ENCODE measurements at regions of chr12 and their contacts with region 1.

Region 1: GRCh38 chr12:99043319-99043914 is 398.3 kb downstream of the APAF1 start:
- DNase-seq: peak; percentile 38
- CTCF ChIP-seq: peak; percentile 93

Region 2: GRCh38 chr12:98635657-98636323 is 407.6 kb before region 1 on chr12:
- CTCF ChIA-PET with region 1: no interaction called
- POLR2A ChIA-PET with region 1: no interaction called
- DNase-seq: peak; percentile 56
- CTCF ChIP-seq: no peak

Region 3: DNA sequence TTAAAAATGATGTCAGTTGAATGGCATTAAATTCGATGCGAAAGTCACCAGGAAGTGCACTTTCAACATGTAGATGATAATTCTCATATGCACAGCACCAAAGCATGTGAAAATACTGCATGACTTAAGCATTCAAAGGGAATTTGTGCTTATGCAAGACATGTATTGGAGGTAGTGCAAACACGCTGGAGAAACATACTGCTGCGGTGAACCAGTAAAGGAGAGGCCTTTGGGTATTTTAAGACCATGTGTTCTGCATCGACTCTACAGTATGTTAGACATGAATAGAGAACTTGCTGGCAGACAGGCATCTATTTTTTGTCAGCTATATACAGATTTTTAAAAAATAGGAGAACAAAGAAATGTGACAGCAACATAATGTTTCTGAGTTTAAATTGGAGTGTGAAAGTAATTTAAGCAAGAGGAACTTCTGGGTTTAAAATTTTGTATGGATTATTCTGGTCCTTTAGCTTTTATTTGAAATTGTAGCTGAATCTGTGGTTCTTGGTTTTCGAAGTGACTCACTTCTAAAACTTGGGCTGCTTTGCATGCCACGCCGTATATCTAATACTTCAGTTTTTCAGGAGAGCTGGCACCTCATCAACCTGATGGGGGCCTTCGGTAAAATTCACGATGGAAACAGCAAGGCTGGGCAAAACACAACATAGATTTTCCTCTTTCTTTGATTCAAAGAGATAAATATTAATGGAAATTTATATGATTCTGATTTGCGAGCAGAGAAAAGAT is 10.4 kb after region 1 on chr12:
- CTCF ChIA-PET with region 1: interaction called, 24 read pairs
- POLR2A ChIA-PET with region 1: no interaction called
- DNase-seq: no peak
- CTCF ChIP-seq: no peak

Region 4: DNA sequence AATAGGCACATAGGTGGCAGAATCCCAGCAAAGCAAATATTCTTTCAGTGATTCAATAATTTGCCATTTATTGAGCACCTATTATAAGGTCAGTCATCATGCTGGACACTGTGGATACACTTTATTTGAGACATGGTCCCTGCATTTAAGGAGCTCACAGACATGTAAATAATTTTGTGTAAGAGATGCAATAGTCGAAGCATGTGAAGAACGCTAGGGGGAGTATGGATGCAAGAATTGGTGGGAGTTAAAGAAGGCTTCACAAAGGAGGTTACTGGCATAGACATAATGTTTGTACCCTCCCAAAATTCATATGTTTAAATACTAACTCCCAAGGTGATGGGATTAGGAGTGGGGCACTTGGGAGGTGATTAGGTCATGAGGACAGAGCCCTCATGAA is 343.5 kb after region 1 on chr12:
- CTCF ChIA-PET with region 1: interaction called, 40 read pairs
- POLR2A ChIA-PET with region 1: no interaction called
- DNase-seq: peak; percentile 28
- CTCF ChIP-seq: peak; percentile 35

Region 5: DNA sequence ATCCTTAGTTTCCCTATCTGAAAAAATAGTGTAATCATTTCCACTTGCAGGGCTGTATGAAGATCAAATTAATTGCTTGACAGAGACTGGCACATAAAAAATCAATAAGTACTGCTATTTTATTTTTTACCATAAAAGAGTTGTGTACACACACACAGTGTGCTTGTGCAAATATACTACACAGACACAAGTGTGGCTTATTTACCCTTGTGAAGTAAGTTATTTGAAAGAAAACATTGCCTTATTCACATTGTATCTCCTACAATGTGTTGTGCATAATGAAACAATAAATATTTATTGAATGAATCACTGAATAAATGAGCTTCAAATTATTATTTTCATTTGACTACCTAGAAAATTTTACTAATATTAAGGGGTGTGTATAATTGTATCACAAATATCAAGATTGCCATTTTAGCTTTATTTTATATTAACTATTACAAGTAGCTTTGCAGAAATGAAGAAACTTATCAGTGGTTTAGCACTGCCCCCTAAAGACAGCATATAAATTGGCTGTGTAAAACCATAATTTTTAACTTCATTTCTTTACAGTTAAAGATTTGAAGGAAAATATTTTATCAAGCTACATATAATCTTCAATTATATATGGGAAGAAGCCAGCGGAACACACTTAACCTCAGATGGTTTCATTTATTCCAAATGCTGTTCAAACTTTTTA is 615.4 kb after region 1 on chr12:
- CTCF ChIA-PET with region 1: interaction called, 48 read pairs
- POLR2A ChIA-PET with region 1: no interaction called
- DNase-seq: no peak
- CTCF ChIP-seq: peak; percentile 24

Measured in GM10248 (cell line).